ENCODE measurements at regions of chr1 and their contacts with region 1.

Region 1: DNA sequence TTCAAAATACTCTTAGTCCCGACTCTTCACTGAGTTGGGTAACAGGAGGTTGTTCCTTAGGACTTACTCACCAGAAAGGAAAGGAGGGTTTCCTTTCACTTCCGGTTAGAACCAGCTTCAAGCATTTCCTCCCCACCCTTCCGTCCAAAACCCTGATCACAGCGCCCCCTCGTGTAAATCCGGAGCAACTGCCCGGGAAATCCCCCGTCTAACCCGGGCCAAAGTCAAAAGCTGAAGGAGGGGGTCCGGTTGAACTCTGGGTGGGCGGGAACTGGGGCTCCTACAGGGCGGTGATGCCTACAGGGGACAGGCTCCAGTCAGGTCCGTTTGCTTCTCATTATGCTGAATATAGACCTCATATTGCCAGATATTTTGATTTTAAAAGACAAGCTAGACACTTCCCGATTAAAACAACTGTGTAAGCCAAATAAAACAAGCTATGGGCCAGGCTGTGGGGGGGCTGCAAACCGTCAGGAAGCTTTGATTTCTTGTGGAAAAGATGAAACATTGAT is 15.0 kb upstream of the MTARC2 start:
- DNase-seq: peak; percentile 73 to 97
- H3K4me3 ChIP-seq: peak overlapping the region in 1 of 4 experiments; percentile 33; a peak in 1 of 8 replicates
- H3K27ac ChIP-seq: no peak overlapping the region
- H3K4me1 ChIP-seq: peaks cover 0 to 2% (median 0%) of the 10 kb centered on the region in 4 experiments; a peak in 1 of 7 replicates
- H3K27me3 ChIP-seq: no peaks in the 10 kb centered on the region
- CTCF ChIP-seq: peak; percentile 78 to 91 (median 87)
- EP300 ChIP-seq: no peak
- POLR2A ChIP-seq: no peak
- RAD21 ChIP-seq: peak; percentile 83 to 84

Region 2: GRCh38 chr1:220552672-220553260 is 180.4 kb before region 1 on chr1:
- CTCF ChIA-PET with region 1: no interaction called
- POLR2A ChIA-PET with region 1: no interaction called
- DNase-seq: no peak
- H3K4me3 ChIP-seq: no peak overlapping the region
- H3K27ac ChIP-seq: no peak overlapping the region
- H3K4me1 ChIP-seq: no peaks in the 10 kb centered on the region; a peak in 1 of 7 replicates
- H3K27me3 ChIP-seq: no peaks in the 10 kb centered on the region
- CTCF ChIP-seq: no peak
- EP300 ChIP-seq: no peak
- POLR2A ChIP-seq: no peak
- RAD21 ChIP-seq: no peak

Region 3: DNA sequence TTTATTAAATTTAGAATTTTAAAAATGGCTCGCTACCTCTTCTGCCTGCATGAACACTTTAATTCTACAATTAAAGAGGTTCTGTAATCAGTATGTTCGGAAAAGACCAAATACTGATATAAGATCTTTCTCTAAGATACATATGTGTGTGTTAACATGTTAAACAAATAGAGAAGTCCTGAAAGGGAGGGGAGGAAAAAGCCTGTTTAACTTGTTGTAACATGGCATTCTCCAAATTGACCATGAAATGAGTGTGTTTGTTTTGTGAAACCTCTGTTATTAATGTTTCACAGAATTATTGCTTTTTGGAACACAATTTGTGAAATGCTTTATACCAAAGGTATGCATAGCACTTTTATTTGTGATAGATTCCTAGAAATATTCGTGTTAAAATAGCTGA is 128.2 kb before region 1 on chr1:
- CTCF ChIA-PET with region 1: no interaction called
- POLR2A ChIA-PET with region 1: no interaction called
- DNase-seq: no peak
- H3K4me3 ChIP-seq: no peak overlapping the region
- H3K27ac ChIP-seq: no peak overlapping the region
- H3K4me1 ChIP-seq: no peaks in the 10 kb centered on the region
- H3K27me3 ChIP-seq: no peaks in the 10 kb centered on the region
- CTCF ChIP-seq: no peak
- EP300 ChIP-seq: no peak
- POLR2A ChIP-seq: no peak
- RAD21 ChIP-seq: no peak

Region 4: DNA sequence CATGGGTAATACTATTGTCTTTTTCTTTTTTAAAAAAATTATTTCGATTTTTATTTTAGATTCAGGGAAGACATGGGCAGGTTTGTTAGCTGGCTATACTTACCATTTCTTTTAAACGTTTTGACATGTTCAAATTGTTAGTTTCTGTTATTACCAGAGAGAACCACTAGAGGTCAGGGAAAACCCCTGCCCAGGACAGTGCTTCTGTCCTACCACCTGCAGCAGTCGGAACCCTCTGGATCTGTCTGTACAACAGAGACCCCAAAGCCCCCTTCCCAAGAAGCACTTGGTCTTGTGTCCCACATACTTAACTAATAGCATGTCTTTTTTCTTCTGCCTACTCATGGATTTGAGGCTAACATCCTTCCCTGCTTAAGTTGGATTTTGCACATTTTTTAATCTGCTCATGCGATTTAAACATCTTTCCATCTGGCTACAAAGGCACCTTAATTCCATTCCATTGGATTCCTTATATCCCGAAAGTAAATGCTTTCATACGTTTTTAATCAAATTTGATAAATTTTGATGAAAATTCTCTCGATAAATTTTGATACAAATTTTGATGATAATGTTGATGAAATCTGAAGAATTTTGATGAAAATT is 53.0 kb before region 1 on chr1:
- CTCF ChIA-PET with region 1: interaction called, 27 read pairs
- POLR2A ChIA-PET with region 1: no interaction called
- DNase-seq: no peak
- H3K4me3 ChIP-seq: no peak overlapping the region
- H3K27ac ChIP-seq: no peak overlapping the region
- H3K4me1 ChIP-seq: no peaks in the 10 kb centered on the region
- H3K27me3 ChIP-seq: no peaks in the 10 kb centered on the region
- CTCF ChIP-seq: peak; percentile 53 to 79 (median 73)
- EP300 ChIP-seq: no peak
- POLR2A ChIP-seq: no peak
- RAD21 ChIP-seq: peak; percentile 81 to 85

Region 5: GRCh38 chr1:220690140-220691025 is 42.8 kb before region 1 on chr1 and contains the start of gene C1orf115:
- CTCF ChIA-PET with region 1: interaction called, 36 read pairs
- POLR2A ChIA-PET with region 1: no interaction called
- DNase-seq: peak; percentile 44 to 96
- H3K4me3 ChIP-seq: peak within 1 kb of the TSS; percentile 46 to 73 (median 57)
- H3K27ac ChIP-seq: no peak within 1 kb of the TSS
- H3K4me1 ChIP-seq: peaks cover 0 to 3% (median 1%) of the 10 kb centered on the region in 4 experiments; a peak in 3 of 7 replicates
- H3K27me3 ChIP-seq: peaks cover 0 to 22% (median 14%) of the 10 kb centered on the region in 4 experiments; a peak in 6 of 7 replicates
- CTCF ChIP-seq: peak; percentile 88 to 95 (median 91)
- EP300 ChIP-seq: no peak
- POLR2A ChIP-seq: peak in 1 of 2 experiments; percentile 58; a peak in 2 of 3 replicates
- RAD21 ChIP-seq: peak; percentile 62 to 71
- total RNA-seq, gene C1orf115: 5.6 and 6.4 TPM in 2 replicates

Region 6: GRCh38 chr1:220700556-220701179 is 32.5 kb before region 1 on chr1:
- CTCF ChIA-PET with region 1: interaction called, 12 read pairs
- POLR2A ChIA-PET with region 1: no interaction called
- DNase-seq: no peak
- H3K4me3 ChIP-seq: no peak overlapping the region
- H3K27ac ChIP-seq: no peak overlapping the region
- H3K4me1 ChIP-seq: peaks cover 0 to 8% (median 3%) of the 10 kb centered on the region in 4 experiments; a peak in 4 of 7 replicates
- H3K27me3 ChIP-seq: no peaks in the 10 kb centered on the region
- CTCF ChIP-seq: no peak
- EP300 ChIP-seq: no peak
- POLR2A ChIP-seq: no peak
- RAD21 ChIP-seq: no peak

Region 7: GRCh38 chr1:220748089-220748934 is 15.2 kb after region 1 on chr1 and contains the start of gene MTARC2:
- CTCF ChIA-PET with region 1: interaction called, 25 read pairs
- POLR2A ChIA-PET with region 1: interaction called, 14 read pairs
- DNase-seq: peak; percentile 57 to 81
- H3K4me3 ChIP-seq: peak within 1 kb of the TSS; percentile 71 to 76 (median 74)
- H3K27ac ChIP-seq: peak within 1 kb of the TSS; percentile 44; the same call in 1 of the 2 replicates
- H3K4me1 ChIP-seq: peaks cover 3 to 9% (median 7%) of the 10 kb centered on the region in 4 experiments; a peak in 5 of 7 replicates
- H3K27me3 ChIP-seq: peaks cover 0 to 28% (median 15%) of the 10 kb centered on the region in 4 experiments; a peak in 6 of 7 replicates
- CTCF ChIP-seq: no peak
- EP300 ChIP-seq: no peak
- POLR2A ChIP-seq: peak; percentile 79 to 92
- RAD21 ChIP-seq: no peak
- total RNA-seq, gene MTARC2: 6.9 and 7.2 TPM in 2 replicates

Region 8: DNA sequence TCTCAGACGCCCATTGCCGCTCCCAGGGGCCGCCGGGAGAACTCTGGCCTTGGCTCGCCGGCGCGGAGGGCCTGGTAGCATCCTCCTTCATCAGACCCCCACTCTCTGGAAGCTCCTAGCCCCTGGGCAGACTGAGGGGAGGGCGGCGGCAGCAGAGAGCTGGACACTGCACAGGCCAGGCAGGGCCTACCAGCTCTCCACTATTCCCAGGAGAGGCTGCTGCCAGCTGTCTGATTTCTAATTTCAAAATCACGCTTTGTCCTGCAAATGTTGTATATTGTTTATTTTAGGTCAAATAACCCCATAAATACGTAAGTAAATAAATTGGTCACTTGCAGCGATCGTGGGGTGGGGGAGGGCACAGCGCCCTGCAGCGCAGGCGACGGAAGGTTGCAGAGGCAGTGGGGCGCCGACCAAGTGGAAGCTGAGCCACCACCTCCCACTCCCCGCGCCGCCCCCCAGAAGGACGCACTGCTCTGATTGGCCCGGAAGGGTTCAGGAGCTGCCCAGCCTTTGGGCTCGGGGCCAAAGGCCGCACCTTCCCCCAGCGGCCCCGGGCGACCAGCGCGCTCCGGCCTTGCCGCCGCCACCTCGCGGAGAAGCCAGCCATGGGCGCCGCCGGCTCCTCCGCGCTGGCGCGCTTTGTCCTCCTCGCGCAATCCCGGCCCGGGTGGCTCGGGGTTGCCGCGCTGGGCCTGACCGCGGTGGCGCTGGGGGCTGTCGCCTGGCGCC is 53.4 kb after region 1 on chr1 and contains the start of gene MTARC1:
- CTCF ChIA-PET with region 1: interaction called, 22 read pairs
- POLR2A ChIA-PET with region 1: interaction called, 3 read pairs
- DNase-seq: peak in 1 of 2 experiments; percentile 81
- H3K4me3 ChIP-seq: peak within 1 kb of the TSS; percentile 59 to 84 (median 69)
- H3K27ac ChIP-seq: peak within 1 kb of the TSS; percentile 63; the same call in 1 of the 2 replicates
- H3K4me1 ChIP-seq: peaks cover 4 to 14% (median 11%) of the 10 kb centered on the region in 4 experiments
- H3K27me3 ChIP-seq: no peaks in the 10 kb centered on the region
- CTCF ChIP-seq: peak in 2 of 3 experiments; percentile 12 to 27; a peak in 2 of 4 replicates
- EP300 ChIP-seq: no peak
- POLR2A ChIP-seq: peak in 1 of 2 experiments; percentile 59; a peak in 2 of 3 replicates
- RAD21 ChIP-seq: peak; percentile 5 to 7; a peak in 1 of 4 replicates
- total RNA-seq, gene MTARC1: 42.4 and 46.2 TPM in 2 replicates

Region 9: DNA sequence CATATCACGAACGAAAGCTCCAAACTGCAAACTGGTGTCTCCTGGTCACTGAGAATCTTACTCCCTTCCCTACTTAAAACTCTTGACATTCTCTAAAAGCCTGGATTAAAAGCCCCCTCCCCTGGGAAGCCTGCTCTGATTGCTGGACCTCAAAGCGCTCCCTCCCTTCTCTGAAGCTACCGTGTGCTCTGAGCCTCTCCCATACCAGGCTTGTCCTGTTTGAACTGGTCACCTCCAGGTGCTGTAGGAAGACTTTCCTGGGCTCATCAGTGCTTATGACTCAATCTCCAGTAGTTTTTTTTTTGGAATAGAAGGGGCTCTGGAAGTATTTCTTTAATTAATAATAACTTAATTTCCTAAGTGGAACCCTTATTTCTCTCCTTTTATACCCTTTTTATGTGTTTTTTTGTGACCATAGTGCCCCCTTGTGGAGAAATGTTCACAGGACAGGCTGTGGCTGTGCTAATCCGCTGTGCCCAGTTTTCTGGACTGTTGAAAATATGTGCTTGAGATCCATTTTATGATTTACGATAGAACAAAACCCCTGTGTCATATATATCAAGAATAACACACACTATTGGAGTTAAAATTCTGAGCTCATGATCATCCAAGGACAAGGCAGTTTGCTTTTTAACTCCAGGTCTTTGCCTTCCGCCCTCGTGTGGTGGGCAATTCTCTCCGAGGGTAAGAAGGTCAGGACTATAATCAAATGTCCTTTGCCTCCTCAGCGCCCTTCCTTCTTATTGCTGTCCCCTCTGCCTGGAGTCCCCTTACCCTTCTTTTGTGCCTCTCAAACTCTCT is 70.5 kb after region 1 on chr1:
- CTCF ChIA-PET with region 1: interaction called, 11 read pairs
- POLR2A ChIA-PET with region 1: interaction called, 4 read pairs
- DNase-seq: no peak
- H3K4me3 ChIP-seq: no peak overlapping the region
- H3K27ac ChIP-seq: no peak overlapping the region
- H3K4me1 ChIP-seq: no peaks in the 10 kb centered on the region; a peak in 1 of 7 replicates
- H3K27me3 ChIP-seq: no peaks in the 10 kb centered on the region
- CTCF ChIP-seq: peak; percentile 42 to 65 (median 58)
- EP300 ChIP-seq: no peak
- POLR2A ChIP-seq: no peak
- RAD21 ChIP-seq: peak; percentile 53 to 61

Region 10: GRCh38 chr1:220943319-220943996 is 210.3 kb after region 1 on chr1:
- CTCF ChIA-PET with region 1: no interaction called
- POLR2A ChIA-PET with region 1: no interaction called
- DNase-seq: no peak
- H3K4me3 ChIP-seq: no peak overlapping the region
- H3K27ac ChIP-seq: no peak overlapping the region
- H3K4me1 ChIP-seq: no peaks in the 10 kb centered on the region
- H3K27me3 ChIP-seq: peaks cover 0 to 1% (median 0%) of the 10 kb centered on the region in 4 experiments; a peak in 1 of 7 replicates
- CTCF ChIP-seq: no peak
- EP300 ChIP-seq: no peak
- POLR2A ChIP-seq: no peak
- RAD21 ChIP-seq: no peak

Region 11: GRCh38 chr1:220983877-220984635 is 250.9 kb after region 1 on chr1:
- CTCF ChIA-PET with region 1: no interaction called
- POLR2A ChIA-PET with region 1: no interaction called
- DNase-seq: peak; percentile 9 to 64
- H3K4me3 ChIP-seq: no peak overlapping the region
- H3K27ac ChIP-seq: no peak overlapping the region
- H3K4me1 ChIP-seq: no peaks in the 10 kb centered on the region
- H3K27me3 ChIP-seq: no peaks in the 10 kb centered on the region
- CTCF ChIP-seq: peak; percentile 49 to 83 (median 74)
- EP300 ChIP-seq: no peak
- POLR2A ChIP-seq: no peak
- RAD21 ChIP-seq: peak; percentile 41 to 57